ENCODE measurements at regions of chr15 and their contacts with region 1.

Region 1: GRCh38 chr15:52171807-52172206 is 19.4 kb downstream of the GNB5 start:
- DNase-seq: no peak
- ATAC-seq: no peak
- H3K4me3 ChIP-seq: no peak overlapping the region
- H3K27ac ChIP-seq: no peak overlapping the region
- H3K4me1 ChIP-seq: no peaks in the 10 kb centered on the region
- H3K27me3 ChIP-seq: no peaks in the 10 kb centered on the region
- CTCF ChIP-seq: no peak
- POLR2A ChIP-seq: no peak
- RAD21 ChIP-seq: no peak

Region 2: GRCh38 chr15:51516291-51516690 is 655.5 kb before region 1 on chr15:
- CTCF ChIA-PET with region 1: no interaction called
- POLR2A ChIA-PET with region 1: interaction called, 18 read pairs
- dilution Hi-C with region 1: no loop called
- in situ Hi-C with region 1: no loop called
- intact Hi-C with region 1: no loop called
- DNase-seq: no peak
- ATAC-seq: no peak
- H3K4me3 ChIP-seq: no peak overlapping the region
- H3K27ac ChIP-seq: no peak overlapping the region
- H3K4me1 ChIP-seq: no peaks in the 10 kb centered on the region
- H3K27me3 ChIP-seq: no peaks in the 10 kb centered on the region
- CTCF ChIP-seq: no peak
- POLR2A ChIP-seq: no peak
- RAD21 ChIP-seq: no peak